ENCODE measurements at regions of chrX and their contacts with region 1.

Region 1: DNA sequence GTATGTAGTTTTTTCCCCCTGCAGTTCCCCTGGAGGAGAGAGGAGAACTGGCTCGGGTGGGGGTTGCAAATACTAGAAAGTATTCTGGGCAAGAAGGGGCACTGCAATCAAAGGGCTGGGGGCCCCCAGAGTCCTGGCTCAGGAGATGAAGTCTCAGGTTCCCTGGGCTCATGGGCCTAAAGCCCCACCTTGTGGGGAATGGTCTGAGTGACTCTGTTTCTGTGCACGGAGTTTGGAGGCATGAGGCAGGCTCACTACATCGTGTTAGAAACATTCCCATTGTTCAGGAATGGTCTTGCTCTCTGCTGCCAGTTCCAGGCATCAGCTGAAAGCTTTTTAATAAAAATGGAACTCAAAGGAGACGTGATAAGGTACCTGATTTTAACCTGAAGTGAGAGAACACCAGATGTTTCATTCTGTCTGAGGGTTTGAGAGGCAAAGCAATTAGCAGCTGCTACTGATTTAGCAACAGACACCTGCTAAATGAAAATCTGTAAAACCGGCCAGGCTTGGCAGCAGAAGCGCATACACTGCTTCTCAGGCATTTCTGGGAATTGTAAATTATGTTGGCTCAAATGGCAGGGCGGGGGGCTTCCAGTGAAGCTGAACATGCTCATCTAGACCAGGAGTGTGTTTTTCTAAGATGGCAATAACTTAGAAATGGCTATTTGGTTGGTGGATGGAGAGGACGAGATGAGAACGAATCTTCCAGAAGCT is 122.7 kb downstream of the TMEM164 start:
- DNase-seq: no peak

Region 2: DNA sequence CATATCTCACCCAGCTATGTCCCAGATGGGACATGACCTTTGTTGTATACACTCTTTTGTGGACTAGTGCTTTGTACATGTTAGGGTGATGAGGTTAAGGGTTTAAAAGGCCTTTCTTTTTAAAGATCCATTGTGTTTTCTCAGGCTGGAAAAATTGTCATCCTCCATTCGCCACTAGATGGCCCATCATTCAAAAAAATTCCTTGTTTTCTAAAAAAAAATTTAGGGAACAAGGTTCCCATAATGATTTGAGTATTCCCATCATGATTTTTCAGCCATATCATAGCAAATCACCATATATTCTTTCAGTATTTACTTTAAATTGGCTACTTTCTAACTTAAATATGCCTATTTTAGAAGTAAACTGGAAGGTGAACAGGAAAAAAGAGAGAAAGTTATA is 214.6 kb before region 1 on chrX:
- intact Hi-C with region 1: loop called (anchors 5 kb)
- DNase-seq: no peak

Region 3: DNA sequence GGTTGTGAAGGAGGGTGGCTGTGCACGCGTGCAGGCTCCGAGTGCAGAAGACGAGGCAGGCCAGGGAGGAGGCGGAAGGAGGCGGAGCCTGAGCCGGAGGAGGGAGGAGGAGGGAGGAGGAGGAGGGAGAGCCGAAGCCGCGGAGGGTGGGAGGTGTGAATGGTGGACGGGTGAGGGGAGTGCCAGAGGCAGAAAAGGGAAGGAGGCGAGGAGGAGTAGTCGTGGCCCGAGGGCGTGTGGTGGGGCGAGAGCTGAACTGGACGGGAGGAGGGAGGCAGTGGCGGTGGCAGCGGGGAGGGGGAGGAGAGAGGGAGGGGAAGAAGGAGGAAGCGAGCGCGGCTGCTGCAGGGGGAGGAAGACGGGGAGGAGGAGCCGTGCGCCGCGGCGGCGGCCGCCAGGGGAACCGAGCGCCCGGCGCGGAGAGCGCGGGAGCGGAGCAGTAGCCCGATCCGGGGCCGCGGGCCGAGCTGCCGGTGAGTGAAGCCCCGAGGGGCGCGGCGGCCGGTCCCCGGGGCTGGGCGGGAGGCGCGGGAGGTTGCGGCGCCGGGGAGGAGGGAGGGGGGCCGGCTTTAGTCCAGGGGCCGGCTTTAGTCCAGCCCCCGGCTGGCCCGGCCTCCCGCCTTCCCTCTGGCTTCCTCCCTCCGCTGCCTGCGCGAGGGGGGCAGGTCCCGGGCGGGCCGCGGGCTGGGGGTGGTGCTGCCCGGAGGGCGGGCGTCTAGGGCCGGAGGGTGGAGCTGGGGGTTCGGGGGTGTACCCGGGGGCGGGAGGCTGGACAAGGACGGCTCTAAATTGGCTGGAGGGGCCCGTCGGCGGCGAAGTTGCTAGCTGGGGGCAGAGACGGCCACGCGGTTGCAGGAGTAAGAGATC is 123.1 kb before region 1 on chrX and contains the start of gene TMEM164:
- intact Hi-C with region 1: no loop called
- DNase-seq: peak; percentile 95
- total RNA-seq, gene TMEM164: 39.9 TPM

Measured in cardiac septum (tissue), 1 donor.